ENCODE measurements at regions of chr12 and their contacts with region 1.

Region 1: GRCh38 chr12:53500776-53501614 is at the start of gene TARBP2:
- DNase-seq: peak; percentile 94
- ATAC-seq: peak; percentile 81
- H3K4me3 Mint-ChIP-seq: peak within 1 kb of the TSS; percentile 92
- H3K27ac Mint-ChIP-seq: peak within 1 kb of the TSS; percentile 96
- H3K4me1 Mint-ChIP-seq: peaks cover 36% of the 10 kb centered on the region
- H3K27me3 Mint-ChIP-seq: no peaks in the 10 kb centered on the region
- CTCF ChIP-seq: no peak
- total RNA-seq, gene TARBP2: 45.7 and 49.6 TPM in 2 replicates

Region 2: DNA sequence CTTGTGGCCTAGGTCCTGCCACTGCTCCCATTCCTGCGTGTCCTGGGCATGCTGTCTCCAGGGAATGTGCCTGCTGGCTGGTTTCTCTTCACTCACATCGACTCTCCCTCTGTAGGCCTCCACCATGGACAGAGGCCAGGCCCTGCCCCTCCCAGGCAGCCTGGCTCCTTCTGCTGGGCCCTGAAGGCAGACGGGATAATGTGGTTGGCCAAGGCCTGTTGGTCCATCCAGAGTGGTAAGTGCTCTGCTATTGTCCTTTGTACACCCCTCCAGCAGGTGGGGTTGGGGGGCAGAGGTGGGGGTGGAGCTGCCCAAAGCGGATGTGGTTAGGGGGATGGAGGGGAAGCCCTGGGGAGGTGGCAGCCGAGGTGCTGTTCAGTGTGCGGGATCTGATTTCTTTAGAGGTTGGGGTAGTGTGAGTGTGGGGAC is 1459.3 kb before region 1 on chr12:
- CTCF ChIA-PET with region 1: no interaction called
- POLR2A ChIA-PET with region 1: interaction called, 11 read pairs
- intact Hi-C with region 1: no loop called
- DNase-seq: peak; percentile 49
- ATAC-seq: peak; percentile 65
- H3K4me3 Mint-ChIP-seq: peak overlapping the region; percentile 73
- H3K27ac Mint-ChIP-seq: peak overlapping the region; percentile 74
- H3K4me1 Mint-ChIP-seq: peaks cover 71% of the 10 kb centered on the region
- H3K27me3 Mint-ChIP-seq: no peaks in the 10 kb centered on the region
- CTCF ChIP-seq: no peak

Region 3: DNA sequence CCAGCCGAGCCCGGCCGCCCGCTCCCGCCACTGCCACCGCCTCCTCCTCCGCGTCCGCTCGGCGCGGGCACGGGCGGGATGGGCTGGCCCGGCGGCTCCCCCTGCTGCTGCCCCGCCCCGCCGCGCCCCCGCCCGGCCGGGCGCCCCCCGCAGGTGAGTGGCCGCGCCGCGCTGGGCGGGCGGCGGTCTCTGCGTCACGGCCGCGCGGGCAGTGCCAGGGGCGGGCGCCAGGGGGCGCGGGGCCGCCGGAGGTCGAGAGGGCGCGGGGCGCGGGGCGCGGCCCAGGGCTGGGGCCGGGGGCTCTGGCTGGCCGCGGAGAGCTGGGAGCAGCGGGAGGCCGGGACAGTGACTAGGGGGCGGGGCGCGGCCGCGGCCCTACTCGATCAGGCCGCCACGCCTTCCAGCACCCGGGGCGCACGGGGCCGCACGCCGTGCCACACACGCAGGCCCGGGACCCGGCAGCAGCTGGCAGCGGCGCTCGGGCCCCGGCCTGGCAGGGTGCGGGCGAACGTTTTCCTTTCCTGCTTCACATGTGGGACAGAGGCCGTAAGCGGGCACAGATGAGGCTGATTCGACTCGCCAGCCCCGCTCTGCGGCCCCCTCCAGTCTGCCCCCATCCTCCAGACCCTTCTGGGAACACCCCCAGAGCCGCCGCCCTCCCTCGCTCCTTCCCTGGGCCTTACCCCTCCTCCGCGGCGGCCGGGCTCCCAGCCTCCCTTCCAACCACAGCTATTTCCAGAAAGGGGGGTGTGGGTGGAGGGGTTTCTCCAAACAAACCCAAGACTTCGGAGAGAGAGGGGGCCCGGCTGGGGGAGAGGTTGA is 453.6 kb before region 1 on chr12:
- CTCF ChIA-PET with region 1: no interaction called
- POLR2A ChIA-PET with region 1: no interaction called
- intact Hi-C with region 1: loop called (anchors 10 kb)
- DNase-seq: peak; percentile 80
- ATAC-seq: peak; percentile 86
- H3K4me3 Mint-ChIP-seq: peak overlapping the region; percentile 64
- H3K27ac Mint-ChIP-seq: peak overlapping the region; percentile 24
- H3K4me1 Mint-ChIP-seq: peaks cover 10% of the 10 kb centered on the region
- H3K27me3 Mint-ChIP-seq: no peaks in the 10 kb centered on the region
- CTCF ChIP-seq: no peak

Region 4: DNA sequence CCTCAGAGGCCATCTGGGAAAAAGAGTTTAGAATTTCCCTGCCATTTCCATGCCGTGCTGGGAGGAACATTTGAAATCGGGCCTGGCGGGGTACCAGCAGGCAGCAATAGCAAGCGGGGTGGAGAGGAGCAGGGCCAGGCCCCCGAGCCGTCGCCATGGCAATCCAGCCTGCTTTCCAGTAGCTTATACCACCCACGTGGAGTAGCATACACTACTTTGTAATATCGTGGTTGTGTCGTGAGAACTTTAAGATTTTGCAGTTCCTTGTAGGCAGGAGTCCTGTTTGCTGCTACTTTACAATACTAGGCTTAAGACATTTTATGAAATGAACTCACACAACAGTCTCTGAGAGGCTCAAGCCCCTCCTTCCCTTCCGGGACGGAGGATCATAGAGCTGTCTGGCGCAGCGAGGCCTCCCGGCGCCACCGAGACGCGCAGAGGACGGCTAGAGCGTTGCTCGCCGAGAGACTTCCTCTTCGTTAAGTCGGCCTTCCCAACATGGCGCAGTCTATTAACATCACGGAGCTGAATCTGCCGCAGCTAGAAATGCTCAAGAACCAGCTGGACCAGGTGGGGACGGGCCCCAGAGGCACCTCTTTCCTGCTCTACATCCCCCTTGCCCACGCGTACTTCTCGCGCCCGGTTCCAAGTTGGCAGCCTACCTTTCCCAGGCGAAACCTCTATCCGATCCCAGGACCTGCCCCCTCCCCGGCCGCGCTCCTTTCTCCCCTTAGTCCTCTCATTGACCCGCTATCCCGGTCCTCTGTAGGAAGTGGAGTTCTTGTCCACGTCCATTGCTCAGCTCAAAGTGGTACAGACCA is 205.7 kb before region 1 on chr12 and contains the start of gene PFDN5:
- CTCF ChIA-PET with region 1: no interaction called
- POLR2A ChIA-PET with region 1: interaction called, 13 read pairs
- intact Hi-C with region 1: loop called (anchors 1 kb)
- DNase-seq: peak; percentile 75
- ATAC-seq: peak; percentile 89
- H3K4me3 Mint-ChIP-seq: peak within 1 kb of the TSS; percentile 99
- H3K27ac Mint-ChIP-seq: peak within 1 kb of the TSS; percentile 97
- H3K4me1 Mint-ChIP-seq: peaks cover 48% of the 10 kb centered on the region
- H3K27me3 Mint-ChIP-seq: no peaks in the 10 kb centered on the region
- CTCF ChIP-seq: no peak
- total RNA-seq, gene PFDN5: 486 and 578 TPM in 2 replicates

Region 5: GRCh38 chr12:53441040-53441833 is 59.8 kb before region 1 on chr12 and contains the start of gene PRR13:
- CTCF ChIA-PET with region 1: no interaction called
- POLR2A ChIA-PET with region 1: interaction called, 12 read pairs
- intact Hi-C with region 1: loop called (anchors 1 kb)
- DNase-seq: peak; percentile 88
- ATAC-seq: peak; percentile 98
- H3K4me3 Mint-ChIP-seq: peak within 1 kb of the TSS; percentile 93
- H3K27ac Mint-ChIP-seq: peak within 1 kb of the TSS; percentile 93
- H3K4me1 Mint-ChIP-seq: peaks cover 40% of the 10 kb centered on the region
- H3K27me3 Mint-ChIP-seq: no peaks in the 10 kb centered on the region
- CTCF ChIP-seq: no peak
- total RNA-seq, gene PRR13: 266 and 288 TPM in 2 replicates

Region 6: DNA sequence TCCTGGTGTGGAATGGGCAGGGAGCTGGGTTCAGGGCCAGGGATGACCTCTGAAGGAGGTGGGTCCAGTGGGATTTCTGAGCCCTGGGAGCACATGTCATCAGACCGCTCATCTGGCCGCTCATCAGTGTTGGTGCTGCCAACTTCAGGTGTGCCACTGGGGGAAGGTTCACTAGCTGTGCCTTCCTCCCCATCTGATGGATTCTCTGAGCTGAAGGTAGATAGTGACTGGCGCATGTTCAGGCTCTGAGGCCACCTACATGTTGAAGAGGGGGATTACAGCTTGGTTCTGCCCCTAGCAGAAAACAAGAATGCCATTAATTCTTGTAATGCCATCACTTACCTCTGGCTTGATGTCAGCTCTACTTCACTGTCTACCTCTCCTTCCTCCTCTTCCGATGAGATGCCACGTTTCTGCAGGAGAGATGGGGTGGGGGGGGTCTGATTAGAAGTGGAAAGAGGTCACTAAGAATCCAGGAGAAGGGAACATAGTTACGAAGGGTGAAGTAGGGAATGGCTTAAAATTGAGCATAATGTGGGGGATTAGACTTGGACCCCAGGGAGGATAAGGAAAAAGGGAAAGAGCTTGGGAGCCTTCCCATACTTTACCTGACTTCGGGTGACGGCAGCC is 18.9 kb before region 1 on chr12:
- CTCF ChIA-PET with region 1: no interaction called
- POLR2A ChIA-PET with region 1: interaction called, 11 read pairs
- intact Hi-C with region 1: no loop called
- DNase-seq: no peak
- ATAC-seq: peak; percentile 54
- H3K4me3 Mint-ChIP-seq: no peak overlapping the region
- H3K27ac Mint-ChIP-seq: no peak overlapping the region
- H3K4me1 Mint-ChIP-seq: peaks cover 3% of the 10 kb centered on the region
- H3K27me3 Mint-ChIP-seq: no peaks in the 10 kb centered on the region
- CTCF ChIP-seq: no peak

Region 7: DNA sequence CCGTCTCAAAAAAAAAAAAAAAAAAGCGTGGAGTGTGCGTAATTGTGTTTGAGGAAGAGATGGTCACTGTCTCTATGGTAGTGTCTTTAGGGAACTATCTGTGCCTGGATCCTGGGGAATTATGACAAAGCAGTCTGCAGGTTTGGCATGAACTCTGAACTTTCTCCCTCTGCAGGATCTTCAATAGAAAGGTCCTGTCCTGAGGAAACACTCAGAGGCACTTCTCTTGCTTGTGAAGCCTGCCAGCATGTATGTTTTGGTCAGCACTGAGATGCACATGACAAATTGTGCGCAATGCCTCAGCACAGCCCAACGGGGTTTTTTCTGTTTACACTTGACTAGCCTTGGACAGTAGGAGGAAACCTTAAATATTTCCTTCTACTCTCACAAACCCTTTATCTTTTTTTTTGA is 78.6 kb after region 1 on chr12:
- CTCF ChIA-PET with region 1: no interaction called
- POLR2A ChIA-PET with region 1: no interaction called
- intact Hi-C with region 1: no loop called
- DNase-seq: no peak
- ATAC-seq: peak; percentile 67
- H3K4me3 Mint-ChIP-seq: no peak overlapping the region
- H3K27ac Mint-ChIP-seq: peak overlapping the region; percentile 16
- H3K4me1 Mint-ChIP-seq: peaks cover 26% of the 10 kb centered on the region
- H3K27me3 Mint-ChIP-seq: no peaks in the 10 kb centered on the region
- CTCF ChIP-seq: no peak

Region 8: GRCh38 chr12:53625946-53626701 is 125.1 kb after region 1 on chr12 and contains the start of gene ATF7:
- CTCF ChIA-PET with region 1: no interaction called
- POLR2A ChIA-PET with region 1: interaction called, 3 read pairs
- intact Hi-C with region 1: loop called (anchors 1 kb)
- DNase-seq: peak; percentile 98
- ATAC-seq: peak; percentile 91
- H3K4me3 Mint-ChIP-seq: peak within 1 kb of the TSS; percentile 98
- H3K27ac Mint-ChIP-seq: peak within 1 kb of the TSS; percentile 99
- H3K4me1 Mint-ChIP-seq: peaks cover 43% of the 10 kb centered on the region
- H3K27me3 Mint-ChIP-seq: no peaks in the 10 kb centered on the region
- CTCF ChIP-seq: no peak
- total RNA-seq, gene ATF7: 29.5 and 36.8 TPM in 2 replicates

Measured in activated B cell treated with CpG ODN at 0.5 μM for 24 hours (primary cell).